HEK293T (cell line): ENCODE measurements at regions of chr6 and their contacts with region 1.

Region 1: DNA sequence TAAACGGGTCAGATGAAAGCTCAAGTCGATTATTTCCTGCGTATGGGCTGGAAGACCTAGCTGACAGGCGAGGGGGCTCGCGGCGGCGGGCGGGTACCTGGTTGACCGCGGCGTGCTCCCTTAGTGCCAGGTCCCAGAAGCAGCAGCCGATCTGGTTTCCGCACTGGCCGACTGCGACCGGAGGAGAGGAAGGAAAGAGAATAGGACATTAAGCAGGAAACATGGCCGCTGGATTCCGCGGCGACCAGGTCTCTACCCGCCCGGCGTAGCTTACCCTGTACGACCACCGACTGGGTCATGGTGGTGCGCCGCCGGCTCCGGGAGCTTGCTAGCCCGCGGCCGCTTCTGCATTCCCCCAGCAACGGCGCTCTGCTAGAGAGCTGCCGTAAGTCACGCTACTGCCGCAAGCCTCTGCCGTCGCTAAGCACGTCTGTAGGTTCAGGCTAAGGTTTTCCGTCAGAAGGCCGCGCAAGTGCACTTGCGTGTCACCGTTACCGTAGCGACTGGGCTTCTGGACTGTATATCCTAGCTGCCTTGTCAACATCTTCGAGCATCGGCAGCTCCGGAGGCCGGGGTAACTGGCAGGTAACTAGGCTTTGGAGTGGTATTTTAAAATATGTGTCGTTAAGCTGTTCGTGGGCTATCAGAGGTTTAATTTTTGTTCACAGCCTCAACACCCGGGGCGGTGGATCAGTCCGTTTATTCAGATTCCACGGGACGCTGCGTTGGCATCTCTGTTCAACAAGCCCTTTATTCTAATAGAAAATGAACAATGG is at the starts of genes FAM229B and TUBE1:
- DNase-seq: peak; percentile 94

Region 2: GRCh38 chr6:112066606-112067005 is 20.7 kb before region 1 on chr6:
- CTCF ChIA-PET with region 1: no interaction called
- POLR2A ChIA-PET with region 1: interaction called, 18 read pairs
- DNase-seq: no peak

Region 3: GRCh38 chr6:112076200-112076599 is 11.1 kb before region 1 on chr6:
- CTCF ChIA-PET with region 1: no interaction called
- POLR2A ChIA-PET with region 1: interaction called, 18 read pairs
- DNase-seq: no peak